Colonic mucosa (tissue), 4 donors: ENCODE measurements at regions of chr7 and their contacts with region 1.

Region 1: DNA sequence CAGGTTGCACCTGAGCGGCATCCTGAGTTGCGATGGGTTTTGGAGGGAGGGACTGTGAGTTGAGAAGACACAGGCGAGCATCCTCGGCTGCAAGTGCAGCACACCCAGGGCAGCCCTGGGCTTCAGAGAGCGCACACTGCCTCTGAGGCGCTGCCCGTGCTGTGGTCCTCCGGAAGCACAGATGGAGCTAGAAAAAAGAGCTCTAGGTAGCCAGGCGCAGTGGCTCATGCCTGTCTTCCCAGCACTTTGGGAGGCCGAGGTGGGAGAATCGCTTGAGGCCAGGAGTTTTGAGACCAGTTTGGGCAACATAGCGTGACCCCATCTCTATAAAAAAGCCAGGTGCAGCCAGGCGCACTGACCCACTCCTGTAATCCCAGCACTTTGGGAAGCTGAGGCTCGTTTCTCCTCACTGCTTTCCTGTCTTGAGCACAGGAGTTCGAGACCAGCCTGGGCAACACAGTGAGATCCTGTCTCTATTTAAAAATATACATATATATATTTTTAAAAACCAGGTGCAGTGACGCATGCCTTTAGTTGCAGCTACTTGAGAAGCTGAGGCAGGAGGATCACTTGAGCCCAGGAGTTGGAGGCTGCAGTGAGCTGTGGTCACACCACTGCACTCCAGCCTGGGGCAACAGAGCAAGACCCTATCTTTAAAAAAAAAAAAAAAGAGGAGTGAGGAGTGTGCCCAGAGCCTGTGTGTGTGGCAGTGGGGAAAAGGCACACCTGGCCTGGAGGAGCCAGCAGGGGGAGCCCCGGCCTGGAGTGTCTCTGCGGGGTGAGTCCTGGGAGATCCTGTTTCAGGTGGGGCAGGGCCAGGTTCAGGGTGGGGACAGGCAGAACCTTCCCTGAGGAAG is 9.3 kb upstream of the ARPC1B start:
- DNase-seq: peak; percentile 82
- H3K4me3 ChIP-seq: no peak overlapping the region
- H3K27ac ChIP-seq: no peak overlapping the region
- H3K4me1 ChIP-seq: no peaks in the 10 kb centered on the region
- H3K27me3 ChIP-seq: no peaks in the 10 kb centered on the region
- CTCF ChIP-seq: peak; percentile 67

Region 2: DNA sequence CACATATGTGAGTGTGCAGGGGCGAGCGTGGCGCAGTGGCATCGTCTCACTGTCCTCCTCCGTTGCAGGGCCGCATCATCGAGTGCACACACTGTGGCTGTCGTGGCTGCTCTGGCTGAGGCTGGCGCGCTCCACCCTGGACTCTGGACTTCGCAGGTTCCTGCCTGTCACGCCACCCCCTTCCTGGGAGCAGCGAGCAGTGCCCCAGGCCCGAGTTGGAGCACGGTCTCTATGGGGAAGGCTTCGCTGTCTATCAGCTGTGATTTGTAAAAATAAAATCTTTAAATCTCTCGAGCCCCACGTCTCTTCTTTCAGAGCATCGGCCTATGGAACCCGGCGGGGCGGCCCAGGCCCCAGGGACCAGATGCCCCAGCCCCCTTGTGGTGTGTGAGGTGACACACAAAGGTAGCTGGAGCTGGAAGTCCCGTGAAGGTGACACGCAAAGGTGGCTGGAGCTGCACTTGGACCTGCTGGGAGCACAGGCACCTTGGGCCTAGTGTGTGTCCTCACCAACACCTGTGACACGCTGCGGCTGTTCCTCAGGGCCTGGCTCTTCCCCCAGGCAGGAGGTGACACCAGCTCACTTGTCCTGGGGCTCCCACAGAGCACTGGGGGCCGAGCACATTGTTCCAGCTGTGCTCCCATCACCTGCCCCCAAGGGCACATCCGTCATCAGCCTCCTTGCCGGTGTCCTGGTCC is 54.3 kb after region 1 on chr7:
- intact Hi-C with region 1: loop called (anchors 5 kb)
- DNase-seq: no peak
- H3K4me3 ChIP-seq: no peak overlapping the region
- H3K27ac ChIP-seq: no peak overlapping the region
- H3K4me1 ChIP-seq: no peaks in the 10 kb centered on the region
- H3K27me3 ChIP-seq: no peaks in the 10 kb centered on the region
- CTCF ChIP-seq: no peak